ENCODE measurements at regions of chr2 and their contacts with region 1.

Region 1: GRCh38 chr2:229869226-229869625 is 52.6 kb downstream of the TRIP12 start:
- DNase-seq: no peak
- ATAC-seq: peak; percentile 16
- H3K4me3 Mint-ChIP-seq: no peak overlapping the region
- H3K27ac Mint-ChIP-seq: no peak overlapping the region
- H3K4me1 Mint-ChIP-seq: peaks cover 63% of the 10 kb centered on the region
- H3K27me3 Mint-ChIP-seq: no peaks in the 10 kb centered on the region

Region 2: DNA sequence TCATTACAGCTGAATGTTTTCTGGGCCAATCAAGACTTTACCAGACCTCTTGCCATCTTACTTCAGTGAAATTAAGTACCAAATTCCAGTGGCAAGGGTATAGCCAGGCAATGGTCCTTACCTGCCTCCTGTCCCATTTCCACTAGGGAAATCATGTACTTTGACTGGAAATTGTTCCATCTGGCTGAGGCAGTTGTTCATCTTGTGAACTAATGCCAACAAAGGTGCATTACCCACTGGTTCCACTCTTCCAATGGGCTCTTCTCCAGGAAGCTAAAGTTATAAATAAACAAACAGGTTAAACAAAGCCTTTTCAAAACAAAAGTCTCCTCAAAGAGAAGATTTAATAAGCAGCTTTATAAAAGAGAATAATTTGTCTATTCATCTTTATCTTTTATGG is 74.2 kb before region 1 on chr2:
- CTCF ChIA-PET with region 1: no interaction called
- POLR2A ChIA-PET with region 1: no interaction called
- intact Hi-C with region 1: no loop called
- DNase-seq: no peak
- ATAC-seq: no peak
- H3K4me3 Mint-ChIP-seq: no peak overlapping the region
- H3K27ac Mint-ChIP-seq: no peak overlapping the region
- H3K4me1 Mint-ChIP-seq: peaks cover 4% of the 10 kb centered on the region
- H3K27me3 Mint-ChIP-seq: no peaks in the 10 kb centered on the region

Region 3: GRCh38 chr2:229835596-229836283 is 33.5 kb before region 1 on chr2:
- CTCF ChIA-PET with region 1: no interaction called
- POLR2A ChIA-PET with region 1: no interaction called
- intact Hi-C with region 1: loop called in 1 of 2 experiments (anchors 5 kb)
- DNase-seq: no peak
- ATAC-seq: peak; percentile 53
- H3K4me3 Mint-ChIP-seq: no peak overlapping the region
- H3K27ac Mint-ChIP-seq: no peak overlapping the region
- H3K4me1 Mint-ChIP-seq: peaks cover 59% of the 10 kb centered on the region
- H3K27me3 Mint-ChIP-seq: no peaks in the 10 kb centered on the region

Region 4: DNA sequence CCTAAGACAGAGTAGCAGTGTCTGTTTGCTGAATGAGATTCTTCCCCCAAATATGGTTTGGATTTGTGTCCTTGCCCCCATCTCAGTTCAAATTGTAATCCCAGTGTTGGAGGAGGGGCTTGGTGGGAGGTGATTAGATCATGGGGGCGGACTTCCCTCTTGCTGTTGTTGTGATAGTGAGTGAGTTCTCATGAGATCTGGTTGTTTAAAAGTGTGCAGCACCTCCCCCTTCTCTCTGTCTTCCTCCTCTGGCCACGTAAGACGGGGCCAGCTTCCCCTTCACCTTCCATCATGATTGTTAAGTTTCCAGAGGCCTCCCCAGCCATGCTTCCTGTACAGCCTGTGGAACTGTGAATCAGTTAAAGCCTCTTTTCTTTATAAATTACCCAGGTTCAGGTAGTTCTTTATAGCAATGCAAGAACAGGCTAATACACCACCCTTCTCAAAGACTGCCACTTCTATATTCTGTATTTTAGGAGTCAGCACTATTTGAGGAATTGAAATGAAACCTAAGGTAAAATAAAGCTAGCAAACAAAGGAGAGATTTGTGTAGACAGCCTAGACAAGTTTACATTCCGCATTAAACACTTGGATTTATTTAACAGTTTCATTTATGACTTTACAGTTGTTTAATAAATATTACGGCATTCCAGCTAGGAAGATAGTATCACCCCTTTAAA is 74.7 kb after region 1 on chr2:
- CTCF ChIA-PET with region 1: no interaction called
- POLR2A ChIA-PET with region 1: no interaction called
- intact Hi-C with region 1: no loop called
- DNase-seq: no peak
- ATAC-seq: no peak
- H3K4me3 Mint-ChIP-seq: no peak overlapping the region
- H3K27ac Mint-ChIP-seq: no peak overlapping the region
- H3K4me1 Mint-ChIP-seq: peaks cover 10% of the 10 kb centered on the region
- H3K27me3 Mint-ChIP-seq: no peaks in the 10 kb centered on the region